ENCODE measurements at regions of chr10 and their contacts with region 1.

Region 1: GRCh38 chr10:99394761-99395386 is 35.5 kb downstream of the GOT1 start:
- DNase-seq: no peak
- H3K4me3 ChIP-seq: no peak overlapping the region
- H3K27ac ChIP-seq: no peak overlapping the region
- H3K4me1 ChIP-seq: peaks cover 0 to 15% (median 4%) of the 10 kb centered on the region in 4 donors
- H3K27me3 ChIP-seq: no peaks in the 10 kb centered on the region
- CTCF ChIP-seq: no peak
- EP300 ChIP-seq: no peak
- POLR2A ChIP-seq: no peak

Region 2: DNA sequence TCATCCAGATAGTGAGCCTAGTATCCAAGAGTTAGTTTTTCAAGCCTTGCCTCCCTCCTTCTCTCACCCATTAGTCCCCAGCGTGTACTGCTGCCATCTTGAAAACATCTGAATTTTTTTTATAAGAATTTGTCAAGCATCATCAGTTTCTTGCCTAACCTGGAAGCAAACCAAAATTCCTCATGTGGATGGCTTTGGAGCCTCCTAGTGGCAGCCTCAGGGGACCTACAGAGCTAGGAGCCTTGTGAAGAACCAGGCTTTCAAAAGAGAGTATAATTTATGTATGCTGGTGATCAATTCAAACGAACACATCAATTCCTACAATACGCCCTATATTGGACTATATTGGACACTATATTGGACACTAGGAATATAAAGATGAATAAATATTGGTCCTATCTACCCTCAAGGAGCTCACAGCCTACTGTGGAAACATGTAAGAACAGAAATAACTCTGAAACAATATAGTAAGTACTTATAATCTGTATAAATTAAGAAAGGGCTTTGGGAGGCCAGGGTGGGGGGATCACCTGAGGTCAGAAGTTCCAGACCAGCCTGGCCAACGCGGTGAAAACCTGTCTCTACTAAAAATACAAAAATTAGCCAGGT is 222.6 kb before region 1 on chr10:
- intact Hi-C with region 1: no loop called
- DNase-seq: no peak
- H3K4me3 ChIP-seq: no peak overlapping the region
- H3K27ac ChIP-seq: no peak overlapping the region
- H3K4me1 ChIP-seq: no peaks in the 10 kb centered on the region
- H3K27me3 ChIP-seq: no peaks in the 10 kb centered on the region
- CTCF ChIP-seq: peak; percentile 14 to 57 (median 50)
- EP300 ChIP-seq: no peak
- POLR2A ChIP-seq: no peak

Region 3: GRCh38 chr10:99548041-99548530 is 153.2 kb after region 1 on chr10:
- intact Hi-C with region 1: loop called (anchors 5 kb)
- DNase-seq: no peak
- H3K4me3 ChIP-seq: no peak overlapping the region
- H3K27ac ChIP-seq: no peak overlapping the region
- H3K4me1 ChIP-seq: peaks cover 0 to 9% (median 4%) of the 10 kb centered on the region in 4 donors
- H3K27me3 ChIP-seq: no peaks in the 10 kb centered on the region
- CTCF ChIP-seq: peak; percentile 29 to 41 (median 37)
- EP300 ChIP-seq: no peak
- POLR2A ChIP-seq: no peak

Region 4: GRCh38 chr10:99612167-99612831 is 217.4 kb after region 1 on chr10:
- intact Hi-C with region 1: loop called (anchors 2 kb)
- DNase-seq: no peak
- H3K4me3 ChIP-seq: no peak overlapping the region
- H3K27ac ChIP-seq: peak overlapping the region in 1 of 4 donors; percentile 12
- H3K4me1 ChIP-seq: peaks cover 0 to 29% (median 23%) of the 10 kb centered on the region in 4 donors
- H3K27me3 ChIP-seq: no peaks in the 10 kb centered on the region
- CTCF ChIP-seq: peak; percentile 65 to 83 (median 78)
- EP300 ChIP-seq: no peak
- POLR2A ChIP-seq: no peak